CD8-positive, alpha-beta memory T cell (primary cell): ENCODE measurements at regions of chr19 and their contacts with region 1.

Region 1: DNA sequence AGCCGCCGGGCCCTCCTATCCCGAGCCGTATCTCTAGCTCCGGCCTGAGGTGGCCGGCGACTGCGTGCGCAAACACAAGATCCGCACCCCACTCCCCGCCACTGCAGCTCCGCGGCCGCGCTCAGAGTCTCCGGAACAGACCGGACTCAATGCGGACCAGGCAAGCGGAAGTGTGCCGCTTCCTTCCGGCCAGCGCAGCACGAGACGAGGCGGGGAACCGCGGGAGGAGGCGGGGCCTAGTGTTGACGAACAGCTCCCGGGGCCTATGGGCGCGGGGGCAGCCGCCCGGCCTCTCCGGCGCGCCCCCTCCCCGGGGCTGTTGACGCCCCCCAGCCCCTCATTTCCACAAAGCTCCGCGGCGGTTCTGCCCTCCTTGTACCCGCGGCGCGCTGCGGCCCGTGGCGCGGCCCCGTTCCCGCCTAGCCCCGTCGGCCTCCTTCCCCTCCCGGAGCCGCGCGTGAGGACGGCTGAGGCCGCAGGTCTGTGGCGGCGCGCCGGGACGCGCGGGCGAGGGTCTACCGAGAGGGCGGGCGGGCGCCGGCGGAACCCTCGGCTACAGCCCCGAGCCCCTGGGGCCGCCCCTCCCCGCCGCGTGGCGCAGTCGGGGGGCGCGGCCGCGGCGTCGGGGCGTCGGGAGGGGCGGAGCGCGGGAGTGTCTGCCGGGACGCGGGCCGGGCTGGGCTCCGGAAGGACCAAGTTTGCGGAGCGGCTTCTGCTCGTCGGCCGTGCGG is at the start of gene DPY19L3:
- DNase-seq: peak; percentile 82 to 92 (median 85)
- H3K4me3 ChIP-seq: peak within 1 kb of the TSS; percentile 78
- H3K4me3 Mint-ChIP-seq: peak within 1 kb of the TSS; percentile 87 to 92 (median 89)
- H3K27ac ChIP-seq: peak within 1 kb of the TSS; percentile 88
- H3K27ac Mint-ChIP-seq: peak within 1 kb of the TSS; percentile 75 to 97 (median 92)
- H3K4me1 ChIP-seq: peaks cover 19% of the 10 kb centered on the region
- H3K4me1 Mint-ChIP-seq: peaks cover 10 to 38% (median 25%) of the 10 kb centered on the region in 3 donors
- H3K27me3 ChIP-seq: no peaks in the 10 kb centered on the region
- H3K27me3 Mint-ChIP-seq: no peaks in the 10 kb centered on the region
- total RNA-seq, gene DPY19L3: 21.6 to 25.0 TPM

Region 2: DNA sequence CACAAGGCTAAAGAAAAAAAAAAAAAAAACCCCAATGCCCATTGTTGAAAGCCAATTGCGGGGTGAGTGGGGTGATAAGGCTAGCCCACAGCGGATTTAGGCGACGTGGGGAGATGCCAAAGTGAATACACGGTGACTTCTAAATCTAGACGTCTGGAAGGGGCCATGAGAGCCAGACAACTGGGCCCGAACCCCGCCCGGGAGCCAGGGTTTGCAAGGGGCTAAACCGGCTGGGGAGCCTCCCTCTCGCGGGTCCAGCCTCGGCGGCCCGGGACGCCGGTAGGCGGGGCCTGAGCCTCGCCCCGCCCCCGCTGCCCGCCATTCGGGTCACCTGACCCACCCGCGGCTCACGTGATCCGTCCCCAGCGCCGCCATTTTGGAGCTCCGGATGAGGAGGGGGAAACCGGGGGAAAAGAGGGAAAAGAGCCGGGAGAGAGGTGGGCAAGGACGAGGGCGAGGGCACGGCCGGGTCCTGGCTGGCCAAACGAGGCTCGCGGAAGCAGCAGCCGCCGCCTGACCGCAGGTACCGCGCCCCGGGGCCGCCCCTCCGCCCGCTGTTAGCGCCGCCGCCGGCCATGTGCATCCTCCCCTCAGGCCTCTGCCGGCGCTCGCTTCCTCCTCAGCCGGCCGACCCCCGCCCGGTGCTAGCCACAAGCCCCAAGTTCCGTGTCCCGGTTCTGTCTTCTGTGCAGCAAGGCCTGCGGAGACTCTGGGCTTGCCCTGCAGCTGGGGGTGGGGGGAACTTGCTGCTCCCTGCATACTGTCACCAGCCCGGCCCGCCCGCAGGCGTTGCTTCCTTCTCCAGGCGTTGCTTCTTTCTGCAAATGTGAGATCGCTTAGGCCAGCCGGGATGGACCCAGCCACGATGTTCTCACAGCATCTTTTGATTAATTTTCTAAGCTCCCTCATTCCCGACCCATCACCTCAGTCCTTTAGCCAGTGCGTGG is 60.1 kb before region 1 on chr19 and contains the start of gene ZNF507:
- CTCF ChIA-PET with region 1: interaction called, 5 read pairs
- POLR2A ChIA-PET with region 1: interaction called, 11 read pairs
- DNase-seq: peak; percentile 77 to 85 (median 77)
- H3K4me3 ChIP-seq: peak within 1 kb of the TSS; percentile 95
- H3K4me3 Mint-ChIP-seq: peak within 1 kb of the TSS; percentile 92 to 100 (median 97)
- H3K27ac ChIP-seq: peak within 1 kb of the TSS; percentile 75
- H3K27ac Mint-ChIP-seq: peak within 1 kb of the TSS; percentile 81 to 99 (median 97)
- H3K4me1 ChIP-seq: peaks cover 39% of the 10 kb centered on the region
- H3K4me1 Mint-ChIP-seq: peaks cover 38 to 48% (median 44%) of the 10 kb centered on the region in 3 donors
- H3K27me3 ChIP-seq: no peaks in the 10 kb centered on the region
- H3K27me3 Mint-ChIP-seq: peaks cover 4 to 6% of the 10 kb centered on the region in 2 donors
- total RNA-seq, gene ZNF507: 29.6 to 32.9 TPM